ENCODE measurements at regions of chr11 and their contacts with region 1.

Region 1: GRCh38 chr11:65606876-65607613 is 7.0 kb downstream of the MAP3K11 start:
- DNase-seq: peak; percentile 90 to 97 (median 96)
- H3K4me3 ChIP-seq: peak overlapping the region; percentile 9 to 68 (median 56)
- H3K27ac ChIP-seq: peak overlapping the region in 58 of 59 donors; percentile 26 to 100 (median 83)
- H3K27me3 ChIP-seq: no peaks in the 10 kb centered on the region
- CTCF ChIP-seq: peak in 14 of 56 donors; percentile 13 to 46 (median 24)

Region 2: GRCh38 chr11:65558002-65558931 is 48.8 kb before region 1 on chr11 and contains the start of gene LTBP3:
- intact Hi-C with region 1: loop called in 1 of 2 experiments (anchors 5 kb)
- DNase-seq: peak; percentile 69 to 90 (median 80)
- H3K4me3 ChIP-seq: peak within 1 kb of the TSS; percentile 56 to 91 (median 70)
- H3K27ac ChIP-seq: peak within 1 kb of the TSS; percentile 80 to 100 (median 98)
- H3K27me3 ChIP-seq: no peaks in the 10 kb centered on the region
- CTCF ChIP-seq: peak in 45 of 56 donors; percentile 11 to 54 (median 34)
- total RNA-seq, gene LTBP3: 97.2 to 228 (median 145) TPM

Region 3: GRCh38 chr11:66363805-66364535 is 756.9 kb after region 1 on chr11:
- intact Hi-C with region 1: no loop called
- DNase-seq: peak in 2 of 10 donors; percentile 23 to 27
- H3K4me3 ChIP-seq: no peak overlapping the region
- H3K27ac ChIP-seq: no peak overlapping the region
- H3K27me3 ChIP-seq: no peaks in the 10 kb centered on the region
- CTCF ChIP-seq: peak in 52 of 56 donors; percentile 14 to 63 (median 46)